PC-9 (cell line): ENCODE measurements at regions of chr7 and their contacts with region 1.

Region 1: DNA sequence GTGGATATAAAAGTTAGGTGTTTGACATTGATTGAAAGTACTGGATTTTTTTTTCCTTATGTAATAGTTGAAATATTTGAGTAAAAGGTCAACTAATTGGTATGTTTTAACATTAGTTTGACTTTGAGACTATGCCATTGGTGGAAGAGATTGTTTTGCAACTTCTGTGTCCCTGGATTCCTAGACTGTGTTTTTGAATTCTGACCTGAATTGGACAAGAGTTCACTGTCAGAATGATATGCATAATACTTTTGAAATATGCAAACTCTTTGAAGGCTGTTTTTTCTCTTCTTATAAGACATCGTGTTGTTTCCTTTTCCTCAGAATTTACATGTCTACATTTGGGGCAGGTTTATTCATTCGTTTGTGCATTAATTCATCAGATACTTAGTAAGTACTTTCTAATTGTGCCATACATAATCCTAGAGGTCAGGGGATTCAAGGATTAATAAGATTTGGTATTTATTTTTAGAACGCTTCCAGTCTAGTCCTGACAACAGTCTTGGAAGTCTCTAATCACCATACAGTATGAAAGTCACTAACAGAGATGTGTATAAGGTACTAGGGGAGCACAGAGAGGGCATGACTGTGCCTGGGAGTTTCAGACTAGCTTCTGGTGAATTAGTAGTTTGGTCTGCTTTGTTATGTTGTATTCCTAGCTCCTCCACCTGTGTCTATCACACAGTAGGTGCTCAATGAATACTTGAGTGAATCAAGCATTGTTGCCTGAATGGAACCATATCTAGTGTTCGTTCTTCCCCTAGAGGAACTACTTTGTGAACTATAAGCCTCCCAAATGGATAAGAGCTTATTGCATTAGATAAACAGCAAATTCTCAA is 49.2 kb downstream of the AGK start:
- DNase-seq: no peak
- H3K4me3 ChIP-seq: no peak overlapping the region
- H3K27ac ChIP-seq: no peak overlapping the region
- H3K4me1 ChIP-seq: no peaks in the 10 kb centered on the region
- H3K27me3 ChIP-seq: no peaks in the 10 kb centered on the region
- CTCF ChIP-seq: no peak

Region 2: DNA sequence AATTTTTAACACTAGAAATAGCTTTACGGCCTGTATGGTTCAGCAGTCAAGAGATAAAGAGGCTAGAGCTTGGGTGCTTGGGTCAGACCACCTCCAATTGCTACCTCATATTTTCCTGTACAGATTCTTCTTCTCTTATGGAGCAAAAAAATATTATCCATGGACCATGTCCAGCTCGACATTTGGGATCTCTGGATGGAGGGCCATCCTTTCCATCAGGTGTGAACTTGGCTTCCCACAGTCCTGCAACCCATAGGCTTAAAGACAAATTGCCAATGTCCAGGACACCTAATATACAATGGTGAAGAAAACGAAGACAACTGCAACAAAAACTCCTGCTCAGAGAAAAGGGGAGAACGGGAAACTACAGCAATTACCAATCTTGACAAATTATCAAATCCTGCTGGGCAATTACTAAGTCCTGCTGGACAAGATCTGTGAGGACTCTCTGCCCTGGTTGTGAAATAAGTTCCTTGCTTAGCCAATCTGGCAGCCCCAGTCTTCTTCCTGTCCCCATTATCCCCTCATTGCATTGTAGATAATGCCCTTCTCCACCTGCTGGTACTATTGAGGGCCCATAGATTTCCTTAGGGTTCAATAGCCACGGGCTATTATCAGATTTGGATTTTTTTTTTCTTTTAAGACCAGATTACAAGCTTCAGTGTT is 633.7 kb before region 1 on chr7:
- CTCF ChIA-PET with region 1: no interaction called
- POLR2A ChIA-PET with region 1: no interaction called
- intact Hi-C with region 1: no loop called
- DNase-seq: no peak
- H3K4me3 ChIP-seq: no peak overlapping the region
- H3K27ac ChIP-seq: no peak overlapping the region
- H3K4me1 ChIP-seq: 0 out of 2 replicates have a peak, but pooled peaks cover 4% of the 10 kb centered on the region
- H3K27me3 ChIP-seq: no peaks in the 10 kb centered on the region
- CTCF ChIP-seq: no peak

Region 3: DNA sequence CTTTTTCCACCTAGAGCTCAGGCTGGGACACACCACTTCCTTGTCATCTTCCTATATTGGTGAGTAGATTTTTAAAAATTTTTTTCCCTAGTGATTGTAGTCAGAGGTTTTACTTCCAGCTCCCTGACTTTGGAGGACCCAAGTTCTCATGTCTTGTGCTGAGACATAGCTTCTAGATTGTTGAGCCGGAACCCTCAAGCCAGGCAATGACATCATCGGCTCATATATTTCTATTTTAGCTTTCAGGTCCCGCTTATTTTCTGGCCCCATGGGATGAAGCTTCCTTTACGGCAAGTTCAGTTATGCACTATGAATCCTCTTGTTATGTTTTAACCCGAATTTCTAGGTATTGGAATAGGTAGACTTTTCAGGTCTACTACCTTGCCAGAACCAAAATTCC is 56.2 kb before region 1 on chr7:
- CTCF ChIA-PET with region 1: no interaction called
- POLR2A ChIA-PET with region 1: interaction called, 12 read pairs
- intact Hi-C with region 1: no loop called
- DNase-seq: no peak
- H3K4me3 ChIP-seq: no peak overlapping the region
- H3K27ac ChIP-seq: no peak overlapping the region
- H3K4me1 ChIP-seq: no peaks in the 10 kb centered on the region
- H3K27me3 ChIP-seq: no peaks in the 10 kb centered on the region
- CTCF ChIP-seq: no peak

Region 4: GRCh38 chr7:142263598-142264380 is 663.4 kb after region 1 on chr7:
- CTCF ChIA-PET with region 1: no interaction called
- POLR2A ChIA-PET with region 1: no interaction called
- intact Hi-C with region 1: no loop called
- DNase-seq: peak in 1 of 2 experiments; percentile 47
- H3K4me3 ChIP-seq: peak overlapping the region; percentile 27; the same call in 1 of the 2 replicates
- H3K27ac ChIP-seq: peak overlapping the region; percentile 51
- H3K4me1 ChIP-seq: peaks cover 16% of the 10 kb centered on the region
- H3K27me3 ChIP-seq: no peaks in the 10 kb centered on the region
- CTCF ChIP-seq: no peak